ENCODE measurements at regions of chr9 and their contacts with region 1.

Region 1: GRCh38 chr9:98989036-98990000 is 45.6 kb downstream of the COL15A1 start:
- DNase-seq: no peak
- H3K4me3 ChIP-seq: no peak overlapping the region
- H3K27ac ChIP-seq: peak overlapping the region; percentile 21 to 79
- H3K4me1 ChIP-seq: no peaks in the 10 kb centered on the region
- H3K27me3 ChIP-seq: no peaks in the 10 kb centered on the region
- CTCF ChIP-seq: no peak
- POLR2A ChIP-seq: no peak

Region 2: DNA sequence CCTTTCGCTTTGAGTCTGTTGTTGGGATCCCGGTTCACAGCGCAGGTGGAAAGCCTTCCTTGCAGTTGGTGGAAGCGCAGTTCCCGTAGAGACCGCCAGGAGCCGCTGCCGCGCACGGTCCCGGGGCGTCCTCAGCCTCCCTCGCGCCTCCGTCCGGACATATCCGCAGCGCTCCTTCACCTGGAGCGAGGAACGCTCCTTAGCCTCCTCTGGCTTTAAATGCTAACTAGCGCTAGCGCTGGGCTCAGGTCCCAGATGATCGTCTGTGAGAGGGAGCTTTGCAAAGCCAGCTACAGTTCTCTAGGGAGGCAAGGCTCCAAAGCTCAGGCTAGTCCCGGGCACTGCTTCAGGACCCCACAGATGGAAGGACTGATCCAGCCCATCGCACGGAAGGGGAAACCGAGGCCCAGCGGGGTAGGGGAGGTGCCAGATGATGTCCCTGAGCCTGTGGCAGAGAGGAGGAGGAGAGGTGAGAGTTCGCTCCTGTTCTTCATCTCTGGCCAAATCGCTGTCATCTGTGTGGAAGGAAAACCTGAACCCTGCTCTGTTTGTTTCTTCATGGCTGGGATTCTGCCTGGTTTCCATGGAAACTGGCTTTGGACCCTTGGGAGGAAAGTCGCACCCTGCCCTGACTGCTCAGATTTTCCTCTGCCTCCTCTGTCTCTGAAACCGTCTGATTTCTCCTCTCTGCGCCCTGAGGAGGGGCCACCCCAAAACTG is 14.2 kb before region 1 on chr9:
- intact Hi-C with region 1: no loop called
- DNase-seq: peak; percentile 66 to 88
- H3K4me3 ChIP-seq: peak overlapping the region in 2 of 3 donors; percentile 2 to 42
- H3K27ac ChIP-seq: peak overlapping the region; percentile 19 to 74
- H3K4me1 ChIP-seq: no peaks in the 10 kb centered on the region
- H3K27me3 ChIP-seq: peaks cover 0 to 11% of the 10 kb centered on the region in 2 donors
- CTCF ChIP-seq: peak; percentile 91 to 96 (median 93)
- POLR2A ChIP-seq: no peak

Region 3: GRCh38 chr9:99948896-99949295 is 959.6 kb after region 1 on chr9:
- intact Hi-C with region 1: loop called (anchors 10 kb)
- DNase-seq: no peak
- H3K4me3 ChIP-seq: no peak overlapping the region
- H3K27ac ChIP-seq: no peak overlapping the region
- H3K4me1 ChIP-seq: peaks cover 0 to 3% of the 10 kb centered on the region in 2 donors
- H3K27me3 ChIP-seq: no peaks in the 10 kb centered on the region
- CTCF ChIP-seq: no peak
- POLR2A ChIP-seq: no peak

Measured in breast epithelium (tissue), 4 donors.